Dorsolateral prefrontal cortex (tissue), 120 donors: ENCODE measurements at regions of chr9 and their contacts with region 1.

Region 1: DNA sequence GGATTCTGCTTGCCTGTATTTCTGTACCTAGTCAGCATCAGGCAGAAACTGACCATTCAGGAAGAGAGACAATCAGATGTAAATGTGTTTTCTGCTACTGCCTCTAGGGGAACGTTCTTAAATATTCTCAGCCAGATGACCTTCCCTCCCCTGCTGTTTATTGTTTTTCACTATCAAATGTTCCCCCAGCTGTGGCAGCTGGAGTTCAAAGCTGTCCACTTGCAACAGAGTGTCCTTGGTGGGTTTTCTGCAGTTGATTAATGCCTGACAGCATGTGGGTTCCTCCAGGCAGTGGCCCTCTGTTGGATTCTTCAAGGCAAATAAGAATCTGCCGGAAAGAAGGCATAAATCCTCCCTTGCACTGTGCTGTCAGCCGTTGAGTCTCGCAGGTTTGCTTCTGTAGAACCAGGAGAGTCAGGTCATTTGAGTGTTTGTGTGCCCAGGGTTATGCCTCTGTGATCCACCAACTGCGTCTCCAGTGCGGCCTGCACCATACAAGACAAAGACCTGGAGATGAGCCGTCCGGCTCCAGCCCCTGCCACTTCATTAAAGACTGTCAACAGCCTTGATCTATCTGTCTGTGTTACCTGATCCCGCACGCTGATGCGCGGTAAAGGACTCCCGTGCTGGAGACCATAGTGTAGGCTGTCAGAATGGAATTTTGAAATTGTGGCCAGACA is 203.4 kb downstream of the GADD45G start:
- DNase-seq: no peak
- H3K4me3 ChIP-seq: no peak overlapping the region
- H3K27ac ChIP-seq: peak overlapping the region in 1 of 59 donors; percentile 52
- H3K27me3 ChIP-seq: no peaks in the 10 kb centered on the region
- CTCF ChIP-seq: peak in 14 of 56 donors; percentile 9 to 38 (median 16)

Region 2: DNA sequence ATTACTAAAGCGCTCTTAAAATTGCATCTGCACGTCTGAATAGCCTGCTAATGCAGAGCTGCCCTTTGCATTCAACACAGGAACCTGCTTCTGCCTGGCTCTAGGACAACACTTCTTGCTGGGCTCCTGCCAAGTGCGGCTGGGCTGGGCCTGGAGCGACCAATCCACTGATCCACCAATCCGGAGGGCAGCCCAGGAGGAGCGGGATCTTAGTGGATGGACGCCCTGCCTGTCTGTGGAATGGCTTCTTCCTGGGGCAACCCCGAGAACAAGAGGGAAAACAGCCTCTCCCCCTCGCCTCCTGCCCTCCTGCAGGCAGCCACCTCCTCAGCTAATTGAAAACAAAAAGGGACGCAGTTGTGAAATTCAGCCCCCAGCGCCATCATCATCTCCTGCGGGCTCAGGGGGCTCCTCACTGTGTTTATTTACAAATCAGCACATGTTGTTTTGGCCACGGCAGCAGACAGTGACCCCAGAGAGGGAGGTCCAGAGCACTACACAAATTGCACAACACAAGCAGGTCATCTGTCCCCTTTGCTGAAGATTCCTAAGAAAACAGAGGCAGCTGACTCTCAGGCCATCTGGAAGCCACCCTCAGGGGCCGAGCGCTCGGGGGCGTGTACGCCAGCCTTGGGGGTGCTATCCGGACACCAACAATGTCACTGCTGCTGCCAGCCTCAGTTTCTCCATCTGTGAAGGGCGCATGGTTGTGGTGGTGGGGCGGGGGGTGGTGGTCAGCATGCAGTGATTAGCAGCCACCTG is 146.1 kb before region 1 on chr9:
- intact Hi-C with region 1: loop called in 1 of 2 experiments (anchors 10 kb)
- DNase-seq: peak; percentile 97 to 100 (median 98)
- H3K4me3 ChIP-seq: peak overlapping the region; percentile 8 to 73 (median 53)
- H3K27ac ChIP-seq: peak overlapping the region in 58 of 59 donors; percentile 23 to 91 (median 78)
- H3K27me3 ChIP-seq: no peaks in the 10 kb centered on the region
- CTCF ChIP-seq: peak in 6 of 56 donors; percentile 12 to 24 (median 19)

Region 3: GRCh38 chr9:89763346-89763985 is 44.8 kb before region 1 on chr9:
- intact Hi-C with region 1: no loop called
- DNase-seq: no peak
- H3K4me3 ChIP-seq: no peak overlapping the region
- H3K27ac ChIP-seq: no peak overlapping the region
- H3K27me3 ChIP-seq: peaks cover 0 to 3% (median 0%) of the 10 kb centered on the region in 45 donors
- CTCF ChIP-seq: no peak

Region 4: GRCh38 chr9:89891591-89892304 is 83.5 kb after region 1 on chr9:
- intact Hi-C with region 1: loop called in 1 of 2 experiments (anchors 5 kb)
- DNase-seq: peak in 3 of 10 donors; percentile 27 to 50 (median 39)
- H3K4me3 ChIP-seq: no peak overlapping the region
- H3K27ac ChIP-seq: peak overlapping the region in 6 of 59 donors; percentile 15 to 40 (median 30)
- H3K27me3 ChIP-seq: no peaks in the 10 kb centered on the region
- CTCF ChIP-seq: no peak

Region 5: DNA sequence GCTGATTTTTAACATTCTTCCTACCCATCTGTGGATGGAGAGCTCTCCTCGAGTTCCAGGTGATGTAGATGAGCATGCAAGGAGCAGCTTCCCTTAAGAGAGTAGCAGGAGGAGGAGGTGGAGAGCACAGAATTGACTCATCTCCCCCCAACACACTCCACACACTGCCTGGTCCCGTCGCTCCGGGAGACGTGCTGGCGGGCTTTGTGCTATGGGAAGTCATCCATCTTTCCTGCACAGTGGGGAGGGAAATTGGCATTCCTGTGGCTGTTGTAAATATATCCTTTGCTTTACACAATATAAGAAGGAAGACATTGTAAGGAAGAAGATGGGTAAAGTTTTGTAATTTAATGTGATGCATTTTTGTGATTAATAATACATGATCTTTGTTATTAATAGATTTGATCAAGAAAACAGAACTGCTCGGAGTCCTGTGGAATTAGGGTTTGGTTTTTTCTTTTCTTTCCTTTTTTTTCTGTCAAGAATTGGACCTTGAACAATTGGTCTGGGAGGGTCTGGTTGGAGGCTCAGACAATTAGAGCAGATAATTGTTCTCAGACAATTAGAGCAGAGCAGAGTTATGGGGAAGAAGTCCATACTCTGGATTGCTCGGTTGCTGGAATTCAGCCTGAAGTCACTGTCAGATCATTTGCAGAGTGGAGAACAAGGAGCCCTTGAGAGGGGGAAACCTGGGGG is 94.4 kb after region 1 on chr9:
- intact Hi-C with region 1: no loop called
- DNase-seq: no peak
- H3K4me3 ChIP-seq: no peak overlapping the region
- H3K27ac ChIP-seq: no peak overlapping the region
- H3K27me3 ChIP-seq: peaks cover 0 to 8% (median 0%) of the 10 kb centered on the region in 45 donors
- CTCF ChIP-seq: no peak

Region 6: DNA sequence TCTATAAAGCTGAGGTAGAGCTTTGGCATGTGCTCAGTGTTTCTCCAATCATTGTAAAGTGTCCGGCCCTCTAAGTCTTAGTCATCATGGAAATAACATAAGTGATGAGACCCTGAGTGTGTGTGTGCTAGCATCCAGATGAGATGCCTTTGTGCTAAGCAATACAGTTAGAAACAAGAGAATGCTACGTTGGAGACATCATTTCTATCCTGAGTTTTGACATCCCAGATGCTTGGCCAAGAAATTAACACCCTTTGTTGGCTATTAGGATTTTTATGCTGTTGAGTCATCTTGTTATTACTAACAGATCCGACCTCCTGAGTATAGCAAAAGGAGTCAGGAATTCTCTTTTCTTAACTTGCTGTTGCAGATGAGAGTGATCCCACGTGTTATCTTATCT is 304.6 kb after region 1 on chr9:
- intact Hi-C with region 1: no loop called
- DNase-seq: no peak
- H3K4me3 ChIP-seq: no peak overlapping the region
- H3K27ac ChIP-seq: no peak overlapping the region
- H3K27me3 ChIP-seq: peaks cover 0 to 4% (median 0%) of the 10 kb centered on the region in 45 donors
- CTCF ChIP-seq: no peak